ENCODE measurements at regions of chr9 and their contacts with region 1.

Region 1: DNA sequence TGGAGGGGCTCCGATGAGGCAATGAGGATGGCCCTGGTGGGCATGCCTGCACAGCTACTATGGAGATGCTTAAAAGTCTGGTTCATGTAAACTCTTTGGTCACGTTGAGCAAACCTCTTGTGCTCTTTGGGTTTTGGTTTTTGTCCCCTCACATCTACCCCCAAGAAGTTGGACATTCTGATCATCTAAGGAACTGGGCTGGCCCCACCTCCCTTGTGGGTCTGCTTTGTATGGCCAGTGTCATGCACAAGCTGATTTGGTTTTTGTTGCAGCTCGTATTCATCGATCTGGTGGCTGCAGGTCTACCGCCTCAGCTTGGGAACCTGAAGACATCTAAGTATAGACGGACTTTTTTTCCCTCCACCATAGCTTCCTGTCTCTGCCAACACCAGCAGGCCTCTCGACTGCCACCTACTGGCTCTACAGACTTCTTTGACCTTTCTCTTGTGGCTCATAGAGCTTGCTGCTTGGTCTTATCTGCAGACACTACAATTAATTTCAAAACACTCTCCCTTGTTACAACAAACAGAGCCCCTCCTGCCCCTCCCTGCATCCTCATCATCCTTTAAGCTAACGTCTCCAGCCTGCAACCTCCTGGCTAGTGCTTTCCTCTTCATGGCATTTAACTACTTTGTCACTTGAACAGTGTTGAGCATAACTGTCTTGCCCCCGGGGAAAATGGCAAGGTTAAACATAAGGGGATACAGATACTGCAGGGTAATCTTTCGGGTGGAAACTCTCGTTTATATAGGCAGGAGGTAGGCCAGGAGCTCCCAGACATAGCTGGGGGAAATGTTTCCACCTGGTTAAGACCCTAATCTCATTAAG is 34.5 kb downstream of the TSTD2 start:
- DNase-seq: peak; percentile 79 to 95 (median 86)
- H3K4me3 ChIP-seq: no peak overlapping the region
- H3K27ac ChIP-seq: peak overlapping the region in 1 of 5 donors; percentile 40
- H3K4me1 ChIP-seq: peaks cover 14 to 40% of the 10 kb centered on the region in 2 donors
- H3K27me3 ChIP-seq: no peaks in the 10 kb centered on the region
- CTCF ChIP-seq: peak; percentile 75 to 85 (median 80)
- POLR2A ChIP-seq: no peak

Region 2: GRCh38 chr9:97468658-97469448 is 129.8 kb before region 1 on chr9:
- intact Hi-C with region 1: loop called in 1 of 2 experiments (anchors 5 kb)
- DNase-seq: peak; percentile 80 to 95 (median 85)
- H3K4me3 ChIP-seq: no peak overlapping the region
- H3K27ac ChIP-seq: peak overlapping the region in 3 of 5 donors; percentile 14 to 53 (median 21)
- H3K4me1 ChIP-seq: peaks cover 0 to 6% of the 10 kb centered on the region in 2 donors
- H3K27me3 ChIP-seq: no peaks in the 10 kb centered on the region
- CTCF ChIP-seq: peak; percentile 55 to 98 (median 95)
- POLR2A ChIP-seq: no peak

Region 3: GRCh38 chr9:97531888-97532376 is 66.7 kb before region 1 on chr9:
- intact Hi-C with region 1: no loop called
- DNase-seq: peak in 1 of 7 donors; percentile 59
- H3K4me3 ChIP-seq: no peak overlapping the region
- H3K27ac ChIP-seq: peak overlapping the region in 1 of 5 donors; percentile 57
- H3K4me1 ChIP-seq: peaks cover 0 to 3% of the 10 kb centered on the region in 2 donors
- H3K27me3 ChIP-seq: no peaks in the 10 kb centered on the region
- CTCF ChIP-seq: no peak
- POLR2A ChIP-seq: no peak

Region 4: DNA sequence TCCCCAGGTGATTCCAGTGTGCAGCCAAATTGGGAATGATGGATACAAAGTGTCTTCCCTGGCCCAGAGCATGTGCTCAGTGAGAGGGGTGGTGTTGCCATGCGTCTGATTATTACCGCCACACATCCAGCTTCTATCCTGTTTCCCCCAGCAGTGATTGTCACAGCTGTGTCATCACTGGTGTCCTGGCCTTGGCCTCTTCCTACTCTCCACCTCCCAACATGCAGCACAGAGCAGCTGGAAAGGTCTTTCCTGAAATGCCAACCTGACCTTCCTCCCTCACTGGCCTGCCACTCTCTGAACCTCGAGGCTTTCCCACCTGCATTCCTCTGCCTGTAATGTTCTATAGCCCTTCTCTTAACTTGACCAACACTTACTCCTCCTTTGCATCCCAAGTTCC is 37.2 kb before region 1 on chr9:
- intact Hi-C with region 1: loop called in 1 of 2 experiments (anchors 2 kb)
- DNase-seq: peak in 6 of 7 donors; percentile 52 to 78 (median 73)
- H3K4me3 ChIP-seq: no peak overlapping the region
- H3K27ac ChIP-seq: peak overlapping the region in 3 of 5 donors; percentile 16 to 88 (median 80)
- H3K4me1 ChIP-seq: peaks cover 46 to 83% of the 10 kb centered on the region in 2 donors
- H3K27me3 ChIP-seq: no peaks in the 10 kb centered on the region
- CTCF ChIP-seq: no peak
- POLR2A ChIP-seq: no peak

Region 5: DNA sequence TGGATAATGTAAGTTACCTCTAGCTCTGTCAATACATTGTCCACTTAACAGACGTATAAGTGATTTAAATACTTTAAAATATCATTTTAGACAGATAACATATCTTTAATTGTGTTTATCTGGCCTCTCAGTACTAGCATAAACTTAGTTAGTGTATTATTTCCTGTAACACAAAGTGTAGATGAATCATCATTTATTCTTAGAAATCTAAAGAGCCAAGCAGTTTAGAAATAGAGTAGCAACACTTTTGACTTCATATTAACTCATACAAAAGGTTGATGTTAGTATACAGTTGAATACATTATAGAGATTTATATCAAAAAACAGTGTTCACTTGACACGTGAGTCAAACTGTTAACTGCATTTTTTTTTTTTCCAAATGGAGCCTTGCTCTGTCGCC is 53.0 kb after region 1 on chr9:
- intact Hi-C with region 1: no loop called
- DNase-seq: no peak
- H3K4me3 ChIP-seq: no peak overlapping the region
- H3K27ac ChIP-seq: no peak overlapping the region
- H3K4me1 ChIP-seq: peaks cover 0 to 4% of the 10 kb centered on the region in 2 donors
- H3K27me3 ChIP-seq: no peaks in the 10 kb centered on the region
- CTCF ChIP-seq: no peak
- POLR2A ChIP-seq: no peak

Region 6: DNA sequence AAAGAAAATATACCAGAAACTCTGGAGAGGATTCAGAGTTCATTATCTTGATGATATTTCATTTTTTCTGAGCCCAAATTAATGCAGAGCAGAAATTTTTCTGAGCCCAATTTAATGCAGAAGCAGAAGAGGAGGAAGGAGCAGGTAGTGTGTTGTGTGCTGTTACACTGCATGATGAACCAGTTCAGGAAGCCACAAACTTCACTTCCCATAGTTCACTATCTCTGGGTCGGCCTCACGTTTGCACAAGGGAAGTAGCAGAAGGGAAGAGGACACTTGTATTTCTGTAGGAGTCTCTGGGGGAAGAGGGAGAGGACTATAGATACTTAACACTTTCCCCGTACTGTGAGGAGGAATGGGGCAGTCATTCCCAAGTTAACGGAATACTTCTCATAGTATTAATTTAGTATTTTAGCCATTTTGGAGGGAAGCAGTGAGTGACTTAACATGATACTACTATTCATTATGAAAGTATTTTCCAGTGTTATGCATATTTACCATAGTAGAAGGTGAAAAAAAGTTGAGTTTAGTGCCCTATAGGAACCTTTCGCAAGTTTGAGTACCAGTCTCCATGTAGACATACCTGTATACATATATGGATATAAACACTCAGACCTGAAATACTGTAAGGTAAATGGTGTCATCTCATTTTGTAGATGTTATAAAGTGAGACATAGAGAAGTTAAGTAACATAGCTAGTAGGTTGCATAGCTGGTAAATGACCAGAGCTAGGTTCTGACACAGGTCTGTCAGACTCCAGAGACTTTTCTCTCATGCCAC is 68.4 kb after region 1 on chr9:
- intact Hi-C with region 1: no loop called
- DNase-seq: no peak
- H3K4me3 ChIP-seq: no peak overlapping the region
- H3K27ac ChIP-seq: peak overlapping the region in 1 of 5 donors; percentile 31
- H3K4me1 ChIP-seq: peaks cover 0 to 16% of the 10 kb centered on the region in 2 donors
- H3K27me3 ChIP-seq: no peaks in the 10 kb centered on the region
- CTCF ChIP-seq: no peak
- POLR2A ChIP-seq: no peak

Measured in adrenal gland (tissue), 19 donors.